Left cardiac atrium (tissue), 4 donors: ENCODE measurements at regions of chr3 and their contacts with region 1.

Region 1: GRCh38 chr3:79086514-79086913 is 681.3 kb downstream of the ROBO1 start:
- DNase-seq: peak; percentile 22
- ATAC-seq: peak in 1 of 2 donors; percentile 19

Region 2: GRCh38 chr3:79354179-79354688 is 267.7 kb after region 1 on chr3:
- intact Hi-C with region 1: loop called in 1 of 2 experiments (anchors 10 kb)
- DNase-seq: no peak
- ATAC-seq: no peak

Region 3: GRCh38 chr3:79361748-79362378 is 275.3 kb after region 1 on chr3:
- intact Hi-C with region 1: loop called (anchors 2 to 10 kb)
- DNase-seq: no peak
- ATAC-seq: peak in 1 of 2 donors; percentile 50

Region 4: DNA sequence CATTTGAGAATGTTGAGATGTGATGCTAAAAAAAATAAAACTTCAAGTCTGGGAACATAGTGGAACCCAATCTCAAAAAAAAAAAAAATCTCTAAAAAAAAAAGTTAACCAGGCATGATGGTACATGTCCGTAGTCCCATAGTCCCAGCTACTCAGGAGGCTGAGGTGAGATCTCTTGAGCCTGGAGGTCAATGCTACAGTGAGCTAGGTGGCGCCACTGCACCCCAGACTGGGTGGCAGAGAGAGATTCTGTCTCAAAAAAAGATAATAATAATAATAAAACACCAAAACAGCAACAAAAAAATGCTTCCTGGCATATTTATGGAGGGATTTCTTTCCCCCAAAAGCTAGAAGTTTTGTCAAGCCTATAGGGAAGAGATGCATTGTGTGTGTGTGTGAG is 319.7 kb after region 1 on chr3:
- intact Hi-C with region 1: no loop called
- DNase-seq: no peak
- ATAC-seq: no peak

Region 5: DNA sequence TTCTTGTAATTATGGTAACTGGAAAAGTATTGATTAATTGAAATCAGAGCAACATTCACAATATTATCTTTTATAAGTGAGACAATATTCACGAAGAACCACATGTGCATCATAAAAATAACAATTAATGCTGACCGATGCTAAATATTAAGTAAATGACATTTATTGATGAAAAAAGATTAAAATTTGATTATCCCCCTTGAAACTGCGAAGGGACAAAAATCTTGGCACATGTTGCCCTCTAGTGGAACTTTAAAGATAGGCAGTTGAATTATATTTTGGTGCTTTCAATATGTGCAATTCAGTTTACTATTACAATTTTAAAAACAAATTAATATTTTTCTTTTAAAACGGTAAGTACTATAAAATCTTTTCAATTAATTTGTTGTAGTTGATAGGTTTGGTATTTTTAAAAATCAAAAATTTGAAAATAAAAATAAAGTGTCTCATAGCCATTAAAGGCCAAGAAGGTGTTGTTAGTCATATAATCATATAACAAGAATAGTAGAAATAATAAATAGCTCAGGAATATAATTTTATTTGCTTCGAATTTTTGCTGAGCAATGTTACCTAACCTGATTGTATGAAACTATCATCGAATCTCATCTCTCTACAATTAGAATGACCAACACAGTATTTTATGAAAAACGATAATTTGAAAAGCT is 411.1 kb after region 1 on chr3:
- intact Hi-C with region 1: loop called (anchors 5 to 10 kb)
- DNase-seq: no peak
- ATAC-seq: no peak

Region 6: DNA sequence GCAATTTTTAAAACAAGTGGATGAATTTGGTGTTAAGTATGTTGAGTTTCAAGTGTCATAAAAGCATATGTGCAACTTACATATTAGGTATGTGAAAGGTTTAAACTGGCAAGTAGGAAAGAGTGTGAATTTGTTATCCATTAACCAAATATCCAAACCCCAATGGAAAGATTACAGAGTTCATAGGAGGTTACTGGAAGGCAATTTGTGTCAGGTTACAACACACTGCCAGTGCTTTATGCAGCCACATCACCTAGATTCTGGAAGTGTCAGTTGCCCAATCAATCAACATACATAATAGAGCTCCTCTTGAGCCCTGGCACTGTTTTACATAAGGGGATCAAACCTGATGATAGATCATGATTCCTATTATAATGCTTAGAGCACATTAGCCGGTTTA is 420.2 kb after region 1 on chr3:
- intact Hi-C with region 1: loop called in 1 of 2 experiments (anchors 10 kb)
- DNase-seq: no peak
- ATAC-seq: no peak